ENCODE measurements at regions of chr9 and their contacts with region 1.

Region 1: GRCh38 chr9:68779558-68780384 is 74.7 kb downstream of the PIP5K1B start:
- DNase-seq: peak; percentile 94 to 96 (median 94)
- H3K4me3 ChIP-seq: peak overlapping the region; percentile 92 to 100
- H3K4me3 Mint-ChIP-seq: no peak overlapping the region
- H3K27ac ChIP-seq: peak overlapping the region; percentile 85
- H3K27ac Mint-ChIP-seq: no peak overlapping the region
- H3K4me1 ChIP-seq: peaks cover 53% of the 10 kb centered on the region
- H3K4me1 Mint-ChIP-seq: peaks cover 3 to 7% (median 4%) of the 10 kb centered on the region in 4 donors
- H3K27me3 ChIP-seq: no peaks in the 10 kb centered on the region
- H3K27me3 Mint-ChIP-seq: peaks cover 4 to 5% of the 10 kb centered on the region in 2 donors

Region 2: GRCh38 chr9:68895741-68896478 is 116.1 kb after region 1 on chr9:
- CTCF ChIA-PET with region 1: interaction called, 4 read pairs
- POLR2A ChIA-PET with region 1: interaction called, 4 read pairs
- intact Hi-C with region 1: loop called (anchors 5 kb)
- DNase-seq: peak in 4 of 5 donors; percentile 28 to 47 (median 39)
- H3K4me3 ChIP-seq: peak overlapping the region in 1 of 2 donors; percentile 10
- H3K4me3 Mint-ChIP-seq: peak overlapping the region; percentile 36 to 83 (median 59)
- H3K27ac ChIP-seq: no peak overlapping the region
- H3K27ac Mint-ChIP-seq: peak overlapping the region; percentile 6 to 92 (median 76)
- H3K4me1 ChIP-seq: peaks cover 34% of the 10 kb centered on the region
- H3K4me1 Mint-ChIP-seq: peaks cover 25 to 45% (median 34%) of the 10 kb centered on the region in 4 donors
- H3K27me3 ChIP-seq: no peaks in the 10 kb centered on the region
- H3K27me3 Mint-ChIP-seq: no peaks in the 10 kb centered on the region